ENCODE measurements at regions of chr2 and their contacts with region 1.

Region 1: GRCh38 chr2:168961450-168962229 is 60.5 kb downstream of the G6PC2 start:
- H3K4me3 Mint-ChIP-seq: no peak overlapping the region
- H3K27ac Mint-ChIP-seq: no peak overlapping the region
- H3K4me1 Mint-ChIP-seq: peaks cover 12% of the 10 kb centered on the region
- H3K27me3 Mint-ChIP-seq: no peaks in the 10 kb centered on the region

Region 2: GRCh38 chr2:168992591-168993349 is 31.1 kb after region 1 on chr2:
- intact Hi-C with region 1: no loop called
- H3K4me3 Mint-ChIP-seq: no peak overlapping the region
- H3K27ac Mint-ChIP-seq: no peak overlapping the region
- H3K4me1 Mint-ChIP-seq: peaks cover 22% of the 10 kb centered on the region
- H3K27me3 Mint-ChIP-seq: peaks cover 3% of the 10 kb centered on the region

Region 3: DNA sequence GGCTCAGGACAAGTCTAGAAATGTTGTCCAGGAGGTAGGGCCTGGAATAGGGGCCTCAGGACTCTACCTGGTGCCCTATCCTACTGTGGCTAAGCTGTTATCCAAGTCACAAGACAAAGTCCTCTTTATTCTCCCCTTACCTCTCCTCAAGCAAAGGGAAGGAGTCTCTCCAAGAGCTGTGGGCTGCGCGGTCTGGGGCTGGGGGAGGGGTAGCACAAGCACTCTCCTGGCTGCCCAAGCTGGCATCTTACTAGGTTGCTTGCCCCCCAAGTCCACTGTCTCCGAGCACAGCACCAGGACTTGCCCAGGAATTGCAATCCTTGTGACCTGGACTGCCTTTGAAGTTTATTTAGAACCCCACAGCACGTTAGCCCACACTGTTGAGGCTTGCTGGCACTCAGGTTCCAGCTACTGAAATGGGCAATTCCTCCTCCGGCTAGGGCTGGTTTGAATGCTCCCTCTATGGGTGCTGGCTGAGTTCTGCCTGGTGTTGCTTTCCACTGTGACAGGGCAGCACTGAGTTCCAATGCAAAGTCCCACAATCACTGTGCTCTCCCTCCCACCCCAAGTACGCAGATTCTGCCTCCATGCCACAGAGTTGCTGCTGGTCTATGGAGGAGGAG is 126.2 kb after region 1 on chr2:
- intact Hi-C with region 1: loop called (anchors 5 kb)
- H3K4me3 Mint-ChIP-seq: no peak overlapping the region
- H3K27ac Mint-ChIP-seq: no peak overlapping the region
- H3K4me1 Mint-ChIP-seq: peaks cover 71% of the 10 kb centered on the region
- H3K27me3 Mint-ChIP-seq: no peaks in the 10 kb centered on the region

Region 4: GRCh38 chr2:169131587-169132512 is 170.2 kb after region 1 on chr2:
- intact Hi-C with region 1: loop called (anchors 1 kb)
- H3K4me3 Mint-ChIP-seq: no peak overlapping the region
- H3K27ac Mint-ChIP-seq: no peak overlapping the region
- H3K4me1 Mint-ChIP-seq: no peaks in the 10 kb centered on the region
- H3K27me3 Mint-ChIP-seq: no peaks in the 10 kb centered on the region

Region 5: DNA sequence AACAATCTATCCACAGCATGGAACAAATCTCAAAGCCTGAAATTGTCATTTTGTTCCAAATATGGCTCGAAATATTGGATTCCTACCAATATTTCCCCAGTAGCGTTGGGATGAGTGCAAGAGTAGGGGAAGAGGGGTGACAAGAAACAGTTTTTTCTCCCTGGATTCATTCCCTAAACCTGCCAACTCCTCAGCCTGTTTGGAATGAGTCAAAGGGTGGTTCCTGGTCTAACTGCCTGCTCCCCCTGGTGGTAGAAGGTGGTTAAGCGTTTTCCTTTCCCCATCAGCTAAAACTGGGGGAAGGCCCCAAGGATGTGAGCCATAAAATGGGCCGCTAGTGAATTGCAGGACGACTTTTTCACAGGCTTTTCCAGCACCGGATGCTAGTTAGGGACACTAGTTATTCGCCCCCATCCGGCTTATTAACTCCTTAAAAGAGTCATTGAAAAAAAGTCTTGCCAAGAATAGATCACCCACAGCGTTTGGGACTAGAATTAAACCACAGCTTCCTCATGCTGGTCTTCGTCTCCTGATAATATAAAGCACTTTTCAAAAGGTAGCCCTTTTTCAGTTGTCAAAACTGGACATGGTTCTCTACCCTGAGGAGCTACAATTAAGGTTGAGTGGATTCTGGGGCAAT is 180.2 kb after region 1 on chr2:
- intact Hi-C with region 1: loop called (anchors 1 kb)
- H3K4me3 Mint-ChIP-seq: no peak overlapping the region
- H3K27ac Mint-ChIP-seq: no peak overlapping the region
- H3K4me1 Mint-ChIP-seq: no peaks in the 10 kb centered on the region
- H3K27me3 Mint-ChIP-seq: no peaks in the 10 kb centered on the region